Activated T-helper 2 cell treated with anti-CD3 and anti-CD28 coated beads, Interferon-gamma antibody, Interleukin-2, Interleukin-4, amounts not matched to agents 10 μg/mL and 5 μg/mL and 100 μg/mL, durations not matched to agents 14 hours and 24 hours and 36 hours (primary cell): ENCODE measurements at regions of chr2 and their contacts with region 1.

Region 1: DNA sequence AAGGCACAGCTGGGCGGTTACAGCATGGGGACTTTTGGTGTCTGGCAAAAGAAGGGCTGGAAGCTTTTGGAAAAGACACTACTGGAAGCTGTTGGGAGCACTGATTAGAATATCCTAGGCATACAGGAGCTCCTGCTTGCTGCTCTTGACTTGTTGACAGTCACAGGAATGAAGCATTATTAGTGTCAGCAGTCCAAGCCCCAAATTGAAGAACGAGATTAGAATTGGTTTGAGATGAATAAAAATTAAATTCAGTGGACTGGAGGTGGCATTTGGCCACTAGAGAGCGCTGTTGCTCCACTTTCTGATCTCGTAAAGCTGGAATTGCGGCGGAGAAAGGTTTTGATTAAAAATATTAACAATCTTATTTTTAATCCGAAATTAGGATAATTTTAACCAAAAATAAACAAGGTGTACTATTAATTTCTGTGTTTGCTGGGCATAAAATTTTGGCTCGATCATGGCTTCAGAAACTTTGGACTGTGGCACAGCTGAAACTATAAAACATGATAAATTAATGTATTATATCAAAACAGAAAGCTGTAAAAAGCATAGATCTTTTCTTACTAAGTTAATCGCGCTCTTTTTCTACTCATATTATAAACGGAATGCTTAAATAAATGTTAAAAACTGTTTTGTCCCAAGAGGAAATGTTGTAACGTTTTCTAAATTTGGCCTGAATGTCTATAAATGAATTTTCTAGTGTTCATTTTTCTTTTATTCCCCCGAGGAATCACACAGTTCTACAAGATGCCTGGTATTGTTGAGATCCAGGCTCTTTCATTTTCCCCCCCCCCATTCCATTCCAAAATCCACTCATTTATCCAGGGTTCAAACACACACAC is 2.4 kb upstream of the HOXD8 start:
- DNase-seq: no peak
- H3K4me3 Mint-ChIP-seq: no peak overlapping the region
- H3K27ac Mint-ChIP-seq: peak overlapping the region; percentile 26
- H3K4me1 Mint-ChIP-seq: peaks cover 8% of the 10 kb centered on the region
- H3K27me3 Mint-ChIP-seq: peaks cover 70% of the 10 kb centered on the region

Region 2: GRCh38 chr2:174341286-174341994 is 1785.7 kb before region 1 on chr2:
- intact Hi-C with region 1: loop called (anchors 10 kb)
- DNase-seq: peak; percentile 82
- H3K4me3 Mint-ChIP-seq: peak overlapping the region; percentile 72
- H3K27ac Mint-ChIP-seq: peak overlapping the region; percentile 77
- H3K4me1 Mint-ChIP-seq: peaks cover 29% of the 10 kb centered on the region
- H3K27me3 Mint-ChIP-seq: peaks cover 61% of the 10 kb centered on the region

Region 3: DNA sequence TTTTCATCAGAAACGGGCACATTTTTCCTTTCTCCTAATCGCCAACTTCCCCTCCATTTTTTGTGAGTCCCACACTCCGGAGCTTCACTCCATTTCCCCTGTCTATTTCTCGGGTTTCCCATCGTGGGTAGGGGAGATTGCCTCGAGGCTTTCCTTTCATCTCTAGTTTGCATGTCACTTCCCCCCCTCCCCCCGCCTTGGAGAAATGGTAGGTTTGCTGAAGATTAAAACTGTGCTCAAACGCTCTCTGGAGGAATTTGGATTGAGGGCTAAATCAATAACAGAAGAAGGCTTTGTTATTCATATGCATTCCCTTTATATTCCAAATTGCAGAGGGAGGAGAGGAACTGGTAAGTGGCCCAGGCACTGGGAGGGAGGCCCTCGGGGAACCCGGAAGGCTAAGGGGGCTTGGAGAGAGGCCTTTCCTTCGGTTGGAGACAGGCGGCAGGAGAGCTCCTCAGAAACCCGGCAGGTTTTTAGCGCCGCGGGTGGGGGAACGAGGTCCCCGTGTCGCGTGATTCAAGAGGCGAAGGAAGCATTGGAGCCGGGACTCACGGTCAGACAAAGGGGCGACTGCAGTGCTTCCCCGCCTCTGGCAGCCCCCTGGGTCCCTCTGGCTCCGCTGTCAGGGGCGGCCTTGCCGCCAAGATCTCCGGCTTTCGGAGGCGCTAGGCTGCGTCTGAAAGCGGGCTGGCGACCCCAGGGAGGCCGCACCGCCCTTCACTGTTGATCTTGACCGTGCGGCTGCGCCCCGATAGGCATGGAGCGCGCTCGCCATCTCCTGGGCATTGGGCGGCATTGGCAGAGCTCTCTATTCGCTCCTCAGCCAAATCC is 29.9 kb before region 1 on chr2:
- intact Hi-C with region 1: loop called (anchors 5 kb)
- DNase-seq: no peak
- H3K4me3 Mint-ChIP-seq: peak overlapping the region; percentile 45
- H3K27ac Mint-ChIP-seq: no peak overlapping the region
- H3K4me1 Mint-ChIP-seq: peaks cover 15% of the 10 kb centered on the region
- H3K27me3 Mint-ChIP-seq: peaks cover 86% of the 10 kb centered on the region

Region 4: DNA sequence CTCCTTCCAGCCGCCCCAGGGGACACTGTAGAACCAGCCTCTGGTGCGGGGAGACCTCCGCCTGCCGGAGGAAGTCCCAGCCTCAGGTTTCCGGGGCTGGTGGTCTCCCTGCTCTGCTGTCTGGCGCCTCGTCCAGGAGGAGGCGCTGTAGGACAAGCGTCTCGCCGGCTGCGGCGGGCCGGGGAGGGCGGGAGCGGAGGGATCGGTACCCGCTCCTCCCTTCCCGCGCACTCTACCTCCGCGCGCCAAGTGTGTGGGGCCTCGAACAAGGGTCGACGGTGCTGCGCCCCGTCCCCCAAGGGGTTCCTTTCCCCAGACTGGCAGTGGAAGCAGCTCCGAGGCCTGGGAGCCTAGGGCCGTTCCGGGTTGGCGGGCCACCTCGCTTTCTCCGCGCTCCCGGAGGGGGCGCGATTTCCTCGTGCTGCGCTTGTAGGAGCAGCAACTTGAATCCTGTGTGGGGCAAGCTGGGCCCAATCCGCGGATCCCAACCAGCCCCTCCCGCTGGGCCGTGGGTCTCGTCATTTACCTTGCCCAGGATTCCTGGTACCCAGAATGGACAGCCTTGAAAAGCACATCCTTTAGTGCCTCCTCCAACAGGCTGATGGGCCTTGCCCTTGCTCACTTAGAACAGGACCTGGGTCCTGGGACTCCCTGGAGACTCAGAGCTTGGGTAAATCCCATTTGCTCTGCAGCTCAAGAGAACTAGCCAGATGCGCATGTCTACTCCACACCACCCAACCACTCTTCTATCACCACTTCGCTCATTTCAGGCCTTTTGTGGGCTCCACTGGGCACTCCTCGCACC is 13.6 kb after region 1 on chr2:
- intact Hi-C with region 1: loop called (anchors 1 kb)
- DNase-seq: peak; percentile 64
- H3K4me3 Mint-ChIP-seq: no peak overlapping the region
- H3K27ac Mint-ChIP-seq: no peak overlapping the region
- H3K4me1 Mint-ChIP-seq: peaks cover 8% of the 10 kb centered on the region
- H3K27me3 Mint-ChIP-seq: peaks cover 80% of the 10 kb centered on the region

Region 5: GRCh38 chr2:176638167-176639015 is 511.2 kb after region 1 on chr2:
- intact Hi-C with region 1: loop called (anchors 2 kb)
- DNase-seq: peak; percentile 29
- H3K4me3 Mint-ChIP-seq: peak overlapping the region; percentile 61
- H3K27ac Mint-ChIP-seq: no peak overlapping the region
- H3K4me1 Mint-ChIP-seq: peaks cover 5% of the 10 kb centered on the region
- H3K27me3 Mint-ChIP-seq: peaks cover 60% of the 10 kb centered on the region

Region 6: DNA sequence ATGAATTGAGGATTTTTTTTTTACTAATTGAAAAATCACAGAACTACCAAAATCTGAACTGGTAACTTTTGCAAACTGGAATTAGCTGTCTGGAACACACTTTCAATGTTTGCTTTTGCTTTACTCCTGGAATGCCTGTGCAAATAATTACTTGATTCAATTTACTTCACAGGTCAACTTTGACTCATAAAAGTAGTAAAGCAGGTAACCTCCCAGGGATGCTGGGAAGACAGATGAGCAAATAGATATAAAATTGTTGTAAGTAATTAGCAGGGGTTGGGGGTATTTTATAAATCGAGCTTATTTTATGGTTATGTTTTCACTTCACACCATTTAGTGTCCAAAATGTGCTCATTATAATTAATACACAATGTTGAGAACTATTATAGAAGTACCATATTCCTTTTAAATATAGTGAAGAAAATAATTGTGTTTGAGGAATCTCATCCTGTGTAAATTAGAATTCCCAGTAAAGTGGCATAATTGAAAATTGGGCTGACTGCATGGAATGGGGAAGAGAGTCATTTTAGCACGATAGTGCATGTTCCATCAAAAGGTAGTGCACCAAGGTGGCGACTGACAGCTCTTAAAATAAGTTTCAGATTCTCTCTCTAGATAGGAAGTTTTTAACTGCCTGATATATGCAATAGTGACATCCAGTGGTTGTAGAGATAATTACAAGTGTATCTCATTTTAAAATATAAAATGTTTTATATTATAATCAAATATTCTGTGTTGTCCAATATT is 687.3 kb after region 1 on chr2:
- intact Hi-C with region 1: loop called (anchors 5 kb)
- DNase-seq: no peak
- H3K4me3 Mint-ChIP-seq: no peak overlapping the region
- H3K27ac Mint-ChIP-seq: no peak overlapping the region
- H3K4me1 Mint-ChIP-seq: peaks cover 4% of the 10 kb centered on the region
- H3K27me3 Mint-ChIP-seq: peaks cover 9% of the 10 kb centered on the region